MCF 10A (cell line): ENCODE measurements at regions of chr12 and their contacts with region 1.

Region 1: GRCh38 chr12:46401662-46402061 is 29.1 kb upstream of the SLC38A2 start:
- DNase-seq: peak; percentile 49
- H3K4me3 Mint-ChIP-seq: no peak overlapping the region
- H3K27ac Mint-ChIP-seq: peak overlapping the region; percentile 86
- H3K4me1 Mint-ChIP-seq: peaks cover 48% of the 10 kb centered on the region
- H3K27me3 Mint-ChIP-seq: no peaks in the 10 kb centered on the region
- CTCF ChIP-seq: peak; percentile 19

Region 2: DNA sequence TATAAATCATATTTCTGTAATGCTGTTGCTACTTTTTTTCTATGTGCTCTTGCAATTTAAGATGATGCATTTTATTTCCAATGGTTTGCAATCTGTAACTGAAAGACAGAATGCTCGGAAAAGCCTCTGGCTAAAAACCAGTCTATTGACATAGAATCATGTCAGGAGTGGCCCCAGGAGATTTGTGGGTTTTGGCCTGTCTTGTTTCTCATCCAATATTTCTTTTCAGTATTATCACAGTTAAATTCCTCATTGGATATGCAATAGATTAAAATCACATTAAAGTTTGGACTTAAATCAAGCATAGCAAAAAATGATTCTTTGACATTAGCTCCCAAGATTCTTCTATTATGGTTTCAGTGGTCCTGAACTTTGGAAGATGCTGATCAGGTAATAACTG is 10.0 kb before region 1 on chr12:
- CTCF ChIA-PET with region 1: interaction called, 4 read pairs
- POLR2A ChIA-PET with region 1: interaction called, 57 read pairs
- intact Hi-C with region 1: no loop called
- DNase-seq: no peak
- H3K4me3 Mint-ChIP-seq: no peak overlapping the region
- H3K27ac Mint-ChIP-seq: no peak overlapping the region
- H3K4me1 Mint-ChIP-seq: peaks cover 45% of the 10 kb centered on the region
- H3K27me3 Mint-ChIP-seq: no peaks in the 10 kb centered on the region
- CTCF ChIP-seq: no peak

Region 3: GRCh38 chr12:46414591-46415268 is 13.1 kb after region 1 on chr12:
- CTCF ChIA-PET with region 1: interaction called, 3 read pairs
- POLR2A ChIA-PET with region 1: interaction called, 41 read pairs
- intact Hi-C with region 1: no loop called
- DNase-seq: no peak
- H3K4me3 Mint-ChIP-seq: no peak overlapping the region
- H3K27ac Mint-ChIP-seq: no peak overlapping the region
- H3K4me1 Mint-ChIP-seq: peaks cover 18% of the 10 kb centered on the region
- H3K27me3 Mint-ChIP-seq: no peaks in the 10 kb centered on the region
- CTCF ChIP-seq: no peak

Region 4: DNA sequence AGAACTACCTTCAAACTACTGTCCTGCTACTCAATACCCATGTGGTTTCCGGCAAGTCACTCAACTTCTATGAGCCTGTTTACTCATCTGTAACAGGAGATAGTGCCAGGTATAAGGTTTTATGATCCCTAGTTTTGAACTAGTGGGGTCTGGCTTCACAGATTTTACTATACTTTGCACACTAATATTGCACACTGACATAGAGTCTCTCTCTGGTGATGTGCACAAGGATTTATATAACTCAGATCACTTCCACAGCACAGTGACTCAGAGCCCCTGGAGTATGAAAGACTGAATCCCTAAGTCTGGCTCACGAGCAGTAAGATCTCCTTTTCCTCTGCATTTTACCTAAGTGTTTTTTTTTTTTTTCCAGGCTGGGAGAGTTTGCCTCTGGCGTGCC is 40.6 kb after region 1 on chr12:
- CTCF ChIA-PET with region 1: no interaction called
- POLR2A ChIA-PET with region 1: interaction called, 16 read pairs
- intact Hi-C with region 1: no loop called
- DNase-seq: peak; percentile 54
- H3K4me3 Mint-ChIP-seq: peak overlapping the region; percentile 28
- H3K27ac Mint-ChIP-seq: peak overlapping the region; percentile 97
- H3K4me1 Mint-ChIP-seq: peaks cover 61% of the 10 kb centered on the region
- H3K27me3 Mint-ChIP-seq: no peaks in the 10 kb centered on the region
- CTCF ChIP-seq: no peak